ENCODE measurements at regions of chr14 and their contacts with region 1.

Region 1: DNA sequence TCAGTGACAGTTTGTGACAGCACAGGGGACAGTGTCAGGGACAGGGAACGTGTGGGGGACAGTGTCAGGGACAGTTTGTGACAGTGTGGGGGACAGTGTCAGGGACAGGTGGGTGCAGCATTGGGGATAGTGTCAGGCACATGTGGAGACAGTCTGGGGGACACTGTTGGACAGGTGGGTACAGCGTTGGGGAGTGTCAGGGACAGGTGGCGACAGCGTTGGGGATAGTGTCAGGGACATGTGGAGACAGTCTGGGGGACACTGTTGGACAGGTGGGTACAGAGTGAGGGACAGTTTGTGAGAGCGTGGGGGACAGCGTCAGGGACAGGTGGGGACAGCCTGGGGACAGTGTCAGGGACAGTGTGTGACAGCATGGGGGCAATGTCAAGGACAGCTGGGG is 140.0 kb downstream of the TMEM121 start:
- DNase-seq: no peak
- H3K4me3 Mint-ChIP-seq: no peak overlapping the region
- H3K27ac Mint-ChIP-seq: no peak overlapping the region
- H3K4me1 Mint-ChIP-seq: no peaks in the 10 kb centered on the region
- H3K27me3 Mint-ChIP-seq: no peaks in the 10 kb centered on the region

Region 2: DNA sequence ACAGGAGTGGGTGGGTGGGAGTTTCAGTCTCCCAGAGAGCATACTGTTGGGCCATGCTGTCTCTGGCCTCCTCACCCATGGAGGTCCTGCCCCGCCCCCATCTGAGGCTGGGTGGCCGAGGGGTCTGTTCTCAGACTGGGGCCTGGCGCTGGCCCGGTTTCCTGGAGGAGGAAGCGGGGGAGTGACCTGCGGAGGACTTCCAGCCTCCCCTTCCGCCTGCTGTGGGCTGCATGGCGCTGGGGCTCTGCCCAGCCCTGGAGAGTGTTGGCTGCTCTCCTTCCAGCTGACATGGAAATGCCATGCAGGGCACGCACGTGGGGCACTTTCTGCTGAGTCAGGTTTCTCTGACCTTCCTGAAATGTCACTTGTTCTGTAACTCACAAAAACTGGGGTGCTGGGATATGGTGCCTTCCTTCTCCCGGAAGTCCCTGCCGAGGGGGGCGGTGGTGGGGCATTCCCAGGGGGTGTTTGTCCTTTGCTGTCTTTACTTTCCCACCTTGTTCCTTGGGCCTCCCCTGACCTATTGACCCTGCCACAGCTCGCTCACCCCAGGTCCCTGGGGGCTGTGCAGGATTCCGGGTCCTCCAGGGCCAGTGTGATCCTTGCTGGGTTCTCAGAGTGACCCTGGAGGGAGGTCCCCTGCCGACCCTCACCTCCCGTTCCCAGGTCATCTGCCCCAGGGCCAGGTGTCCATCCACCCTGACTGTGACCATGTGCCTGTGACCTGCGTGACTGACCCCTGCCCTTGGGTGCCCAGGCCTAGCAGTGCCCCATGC is 328.3 kb before region 1 on chr14:
- intact Hi-C with region 1: no loop called
- DNase-seq: no peak
- H3K4me3 Mint-ChIP-seq: no peak overlapping the region
- H3K27ac Mint-ChIP-seq: no peak overlapping the region
- H3K4me1 Mint-ChIP-seq: no peaks in the 10 kb centered on the region
- H3K27me3 Mint-ChIP-seq: no peaks in the 10 kb centered on the region

Region 3: DNA sequence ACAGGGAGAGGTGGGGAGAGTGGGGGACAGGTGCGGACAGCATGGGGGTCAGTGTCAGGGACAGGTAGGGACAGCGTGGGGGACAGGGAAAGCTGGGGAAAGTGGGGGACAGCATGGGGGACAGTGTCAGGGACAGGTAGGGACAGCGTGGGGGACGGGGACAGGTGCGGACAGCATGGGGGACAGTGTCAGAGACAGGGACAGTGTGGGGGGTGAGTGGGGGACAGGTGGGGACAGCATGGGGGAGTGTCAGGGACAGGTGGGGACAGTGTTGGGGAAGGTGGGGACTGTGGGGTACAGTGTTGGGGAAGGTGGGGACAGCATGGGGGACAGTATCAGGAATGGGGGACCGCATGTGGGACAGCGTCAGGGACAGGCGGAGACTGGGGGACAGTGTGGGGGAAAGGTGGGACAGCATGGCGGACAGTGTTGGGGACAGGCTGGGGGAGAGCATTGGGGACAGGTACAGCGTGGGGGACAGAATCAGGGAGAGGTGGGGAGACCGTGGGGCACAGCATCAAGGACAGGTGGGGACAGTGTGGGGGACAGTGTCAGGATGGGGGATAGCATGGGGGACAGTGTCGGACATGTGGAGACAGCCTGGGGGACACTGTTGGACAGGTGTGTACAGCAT is 44.0 kb before region 1 on chr14:
- intact Hi-C with region 1: loop called (anchors 2 kb)
- DNase-seq: no peak
- H3K4me3 Mint-ChIP-seq: no peak overlapping the region
- H3K27ac Mint-ChIP-seq: no peak overlapping the region
- H3K4me1 Mint-ChIP-seq: no peaks in the 10 kb centered on the region
- H3K27me3 Mint-ChIP-seq: no peaks in the 10 kb centered on the region

Region 4: GRCh38 chr14:105690692-105691091 is 24.3 kb after region 1 on chr14:
- intact Hi-C with region 1: no loop called
- DNase-seq: no peak
- H3K4me3 Mint-ChIP-seq: no peak overlapping the region
- H3K27ac Mint-ChIP-seq: no peak overlapping the region
- H3K4me1 Mint-ChIP-seq: no peaks in the 10 kb centered on the region
- H3K27me3 Mint-ChIP-seq: peaks cover 9% of the 10 kb centered on the region

Region 5: GRCh38 chr14:105765893-105766614 is 99.6 kb after region 1 on chr14:
- intact Hi-C with region 1: no loop called
- DNase-seq: no peak
- H3K4me3 Mint-ChIP-seq: no peak overlapping the region
- H3K27ac Mint-ChIP-seq: no peak overlapping the region
- H3K4me1 Mint-ChIP-seq: no peaks in the 10 kb centered on the region
- H3K27me3 Mint-ChIP-seq: no peaks in the 10 kb centered on the region

Measured in activated T-helper 1 cell treated with anti-CD3 and anti-CD28 coated beads, Interleukin-12 subunit alpha, Interleukin-12 subunit beta, Interleukin-2, Interleukin-4 antibody, amounts not matched to agents 30 ng/mL and 10 ng/mL and 1 ng/mL, durations not matched to agents 14 hours and 24 hours and 36 hours (primary cell).